ENCODE measurements at regions of chr2 and their contacts with region 1.

Region 1: DNA sequence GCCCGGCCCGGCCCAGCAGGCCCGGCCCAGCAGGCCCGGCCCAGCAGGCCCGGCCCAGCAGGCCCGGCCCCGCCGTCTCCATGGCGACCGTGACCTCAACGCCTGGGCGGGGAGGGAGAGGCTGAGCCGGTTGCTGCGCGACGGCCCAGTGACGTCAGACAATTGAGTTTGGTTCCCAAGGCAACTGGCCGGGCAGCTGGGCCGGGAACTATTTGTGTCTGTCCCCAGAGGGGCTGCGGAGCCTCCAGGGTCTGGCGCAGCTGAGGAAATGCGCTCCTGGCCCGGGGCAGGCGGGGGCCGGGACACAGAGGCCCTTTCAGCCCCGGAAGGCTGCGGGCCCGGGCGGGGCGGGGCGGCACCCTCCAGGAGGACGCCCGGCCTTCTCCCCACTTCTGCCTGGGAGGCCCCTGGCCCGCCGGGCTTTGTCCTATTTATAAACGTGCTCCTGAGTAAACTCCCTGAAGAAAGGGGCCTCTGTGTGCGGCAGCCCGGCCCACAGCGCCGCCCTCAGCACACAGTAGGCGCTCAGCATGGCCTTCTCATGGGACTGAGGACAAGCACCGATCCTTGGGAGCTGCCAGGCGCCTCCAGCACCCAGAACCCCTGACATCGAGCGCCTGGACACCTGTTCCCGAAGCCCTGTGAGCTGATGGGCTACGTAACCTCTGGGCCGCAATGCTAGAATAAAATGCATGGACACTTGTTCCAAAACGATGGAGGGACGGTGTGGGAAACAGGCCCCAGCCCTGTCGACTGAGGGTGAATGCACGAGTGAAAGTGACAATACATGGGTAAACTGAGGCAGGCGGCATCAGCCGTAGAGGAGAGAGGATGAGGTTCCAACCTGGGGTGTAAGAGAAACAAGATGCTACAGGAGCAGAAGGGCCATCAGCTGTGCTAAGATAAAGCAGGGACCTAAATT is 12.3 kb downstream of the TEX44 start:
- H3K4me3 Mint-ChIP-seq: peak overlapping the region; percentile 54
- H3K27ac Mint-ChIP-seq: peak overlapping the region; percentile 79
- H3K4me1 Mint-ChIP-seq: peaks cover 29% of the 10 kb centered on the region
- H3K27me3 Mint-ChIP-seq: peaks cover 23% of the 10 kb centered on the region

Region 2: GRCh38 chr2:231514103-231514950 is 90.6 kb before region 1 on chr2:
- intact Hi-C with region 1: loop called (anchors 5 kb)
- H3K4me3 Mint-ChIP-seq: peak overlapping the region; percentile 92
- H3K27ac Mint-ChIP-seq: peak overlapping the region; percentile 88
- H3K4me1 Mint-ChIP-seq: peaks cover 12% of the 10 kb centered on the region
- H3K27me3 Mint-ChIP-seq: peaks cover 11% of the 10 kb centered on the region

Region 3: DNA sequence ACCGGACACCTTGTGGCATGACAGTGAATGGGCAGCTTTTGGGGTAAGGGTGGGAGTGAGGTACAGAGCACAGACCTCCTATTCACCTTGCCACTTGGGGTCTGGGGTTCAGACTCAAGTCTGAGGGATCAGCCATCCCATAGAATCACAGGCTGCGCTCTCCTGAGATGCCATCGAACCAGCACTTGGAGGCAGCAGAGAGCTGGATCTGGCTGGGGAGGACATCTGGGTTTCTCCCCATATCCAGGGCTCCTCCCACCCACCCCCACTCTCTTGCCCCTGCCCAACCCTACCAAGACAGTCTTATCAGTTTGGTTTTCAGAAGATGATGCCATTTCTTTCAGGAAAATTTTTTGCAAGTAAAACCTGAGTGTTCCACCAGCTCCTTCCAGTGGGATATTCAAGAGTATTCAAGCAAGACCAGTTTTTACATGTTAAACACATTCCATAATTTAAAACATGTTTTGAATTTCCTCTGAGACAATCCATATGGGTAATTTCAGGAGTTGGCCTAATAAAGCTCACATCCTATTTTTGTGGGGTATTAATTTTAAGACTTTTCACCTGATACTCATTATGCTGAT is 41.5 kb before region 1 on chr2:
- intact Hi-C with region 1: loop called (anchors 1 kb)
- H3K4me3 Mint-ChIP-seq: no peak overlapping the region
- H3K27ac Mint-ChIP-seq: no peak overlapping the region
- H3K4me1 Mint-ChIP-seq: peaks cover 5% of the 10 kb centered on the region
- H3K27me3 Mint-ChIP-seq: peaks cover 13% of the 10 kb centered on the region